Dorsolateral prefrontal cortex (tissue), 120 donors: ENCODE measurements at regions of chr19 and their contacts with region 1.

Region 1: GRCh38 chr19:54137086-54137921 is at the start of gene CNOT3:
- DNase-seq: peak; percentile 95 to 100 (median 99)
- H3K4me3 ChIP-seq: peak within 1 kb of the TSS; percentile 60 to 100 (median 97)
- H3K27ac ChIP-seq: peak within 1 kb of the TSS in 57 of 59 donors; percentile 70 to 97 (median 92)
- H3K27me3 ChIP-seq: no peaks in the 10 kb centered on the region
- CTCF ChIP-seq: peak in 2 of 56 donors; percentile 10 to 15
- total RNA-seq, gene CNOT3: 29.1 to 60.7 (median 39.7) TPM

Region 2: DNA sequence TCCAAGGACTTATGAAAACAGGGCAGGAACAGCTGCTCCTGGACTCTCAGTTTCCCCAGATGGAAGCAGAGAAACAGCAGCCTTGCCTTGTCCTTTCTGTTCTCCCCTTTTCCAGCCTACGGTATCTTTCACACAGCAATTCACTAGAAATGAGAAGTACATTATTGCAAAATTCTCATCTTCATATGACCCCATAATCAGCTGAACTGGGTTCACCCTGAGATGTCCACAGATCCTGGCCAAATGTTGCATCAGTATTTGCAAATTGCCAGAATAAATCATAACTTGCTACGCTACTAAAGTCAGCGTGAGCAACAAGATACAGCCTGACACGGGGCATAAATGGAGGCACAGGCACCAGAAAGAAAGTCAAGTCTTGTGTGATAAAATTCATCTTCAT is 89.7 kb before region 1 on chr19:
- intact Hi-C with region 1: no loop called
- DNase-seq: no peak
- H3K4me3 ChIP-seq: no peak overlapping the region
- H3K27ac ChIP-seq: no peak overlapping the region
- H3K27me3 ChIP-seq: peaks cover 0 to 25% (median 0%) of the 10 kb centered on the region in 45 donors
- CTCF ChIP-seq: no peak

Region 3: DNA sequence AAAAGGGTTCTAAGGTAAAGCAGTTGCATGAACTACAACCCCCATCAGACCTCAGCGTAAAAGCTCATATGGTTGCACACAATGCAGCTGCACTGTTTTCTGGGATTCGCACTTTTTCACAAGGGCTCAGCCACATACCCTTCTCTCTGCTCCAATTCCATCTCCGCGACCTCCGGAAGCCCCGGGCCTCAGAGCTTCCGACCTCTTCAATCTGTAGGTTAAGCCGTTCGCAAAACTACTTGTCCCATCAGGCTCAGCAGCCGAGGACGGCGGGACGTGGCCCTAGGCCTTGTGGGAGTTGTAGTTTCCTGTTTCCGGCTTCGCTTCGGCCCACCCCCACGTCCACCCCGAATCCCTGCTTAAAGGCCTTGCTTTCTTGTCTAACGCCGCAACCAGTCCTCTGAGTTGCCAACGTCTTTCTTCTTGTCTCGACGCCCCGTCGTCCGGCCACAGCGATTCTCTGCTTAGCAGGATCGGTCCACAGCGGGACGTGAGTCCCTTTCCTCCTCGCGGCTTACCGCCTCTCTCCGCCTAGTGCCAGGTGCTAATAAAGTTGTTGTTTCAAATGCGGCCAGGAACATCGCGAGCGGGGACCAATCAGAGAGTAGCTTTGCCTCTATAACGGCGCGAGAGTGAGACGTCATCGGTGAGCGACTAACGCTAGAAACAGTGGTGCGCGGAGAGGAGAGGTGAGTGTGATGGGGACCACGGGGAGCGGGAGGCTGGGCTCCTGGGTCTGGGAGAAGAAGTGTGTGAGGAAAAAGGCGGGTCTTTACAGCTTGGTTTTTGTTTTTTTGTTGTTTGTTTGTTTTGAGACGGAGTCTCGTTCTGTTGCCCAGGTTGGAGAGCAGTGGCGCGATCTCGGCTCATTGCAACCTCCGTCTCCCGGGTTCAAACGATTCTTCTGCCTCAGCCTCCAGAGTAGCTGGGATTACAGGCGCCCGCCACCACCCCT is 21.9 kb before region 1 on chr19 and contains the starts of genes PRPF31 and TFPT:
- intact Hi-C with region 1: loop called in 1 of 2 experiments (anchors 2 kb)
- DNase-seq: peak; percentile 93 to 98 (median 95)
- H3K4me3 ChIP-seq: peak within 1 kb of the TSS; percentile 66 to 100 (median 93)
- H3K27ac ChIP-seq: peak within 1 kb of the TSS; percentile 69 to 99 (median 95)
- H3K27me3 ChIP-seq: no peaks in the 10 kb centered on the region
- CTCF ChIP-seq: peak in 19 of 56 donors; percentile 5 to 52 (median 18)
- total RNA-seq, gene PRPF31: 38.2 to 60.7 (median 48.1) TPM
- total RNA-seq, gene TFPT: 30.8 to 72.2 (median 49.8) TPM